Mammary epithelial cell (primary cell): ENCODE measurements at regions of chr14 and their contacts with region 1.

Region 1: GRCh38 chr14:90475298-90475697 is 78.5 kb downstream of the CALM1 start:
- DNase-seq: no peak
- H3K4me3 ChIP-seq: no peak overlapping the region
- H3K27ac ChIP-seq: no peak overlapping the region
- H3K4me1 ChIP-seq: no peaks in the 10 kb centered on the region
- H3K27me3 ChIP-seq: no peaks in the 10 kb centered on the region
- CTCF ChIP-seq: no peak

Region 2: DNA sequence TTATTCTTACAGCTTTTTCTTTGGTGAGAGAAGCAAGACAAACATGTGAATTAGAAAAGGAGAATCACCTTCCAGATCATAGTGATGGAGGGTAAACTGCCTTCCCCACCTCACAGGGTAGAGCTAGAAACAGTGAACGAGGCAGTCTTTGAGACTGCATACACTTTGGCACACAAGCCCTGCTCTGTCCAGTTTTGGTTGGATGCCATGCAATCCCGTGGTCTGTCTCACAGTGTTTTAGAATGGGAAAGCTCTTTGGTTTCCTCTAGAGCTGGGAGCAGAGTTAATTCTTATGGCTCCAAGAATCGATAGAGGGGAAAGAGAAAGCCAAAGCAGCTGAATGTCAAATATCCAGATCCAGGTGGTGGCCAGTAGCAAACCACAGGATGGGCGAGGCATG is 497.6 kb before region 1 on chr14:
- CTCF ChIA-PET with region 1: no interaction called
- dilution Hi-C with region 1: no loop called
- in situ Hi-C with region 1: no loop called
- intact Hi-C with region 1: no loop called
- DNase-seq: no peak
- H3K4me3 ChIP-seq: no peak overlapping the region
- H3K27ac ChIP-seq: no peak overlapping the region
- H3K4me1 ChIP-seq: no peaks in the 10 kb centered on the region
- H3K27me3 ChIP-seq: no peaks in the 10 kb centered on the region
- CTCF ChIP-seq: no peak

Region 3: DNA sequence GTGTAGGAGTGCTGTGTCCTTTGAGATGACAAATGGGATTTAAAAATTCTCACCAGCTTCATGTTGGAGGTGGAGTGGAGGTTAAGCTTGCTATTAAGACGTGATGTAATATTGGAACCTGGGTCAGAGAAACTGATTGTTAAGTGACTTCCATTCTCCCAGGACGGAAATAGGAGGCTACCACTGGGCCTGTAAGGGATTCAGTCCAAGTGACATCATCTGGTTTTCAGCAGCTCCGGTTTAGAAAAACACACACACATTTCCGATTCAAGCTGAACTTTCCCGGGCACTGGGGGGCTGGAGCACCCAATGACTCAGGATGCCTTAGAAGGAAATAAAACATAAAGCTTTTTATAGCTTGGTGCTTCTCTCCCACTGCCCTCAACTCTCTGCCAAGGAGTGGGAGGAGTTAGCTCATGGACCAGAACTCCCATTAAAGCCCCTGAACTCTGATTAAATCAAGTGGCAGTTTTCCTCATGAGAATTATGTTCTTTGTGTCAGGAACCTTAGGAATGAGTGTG is 66.0 kb before region 1 on chr14:
- CTCF ChIA-PET with region 1: no interaction called
- dilution Hi-C with region 1: loop called (anchors 5 kb)
- in situ Hi-C with region 1: no loop called
- intact Hi-C with region 1: no loop called
- DNase-seq: peak; percentile 79
- H3K4me3 ChIP-seq: no peak overlapping the region
- H3K27ac ChIP-seq: no peak overlapping the region
- H3K4me1 ChIP-seq: peaks cover 10% of the 10 kb centered on the region
- H3K27me3 ChIP-seq: no peaks in the 10 kb centered on the region
- CTCF ChIP-seq: no peak